Activated CD8-positive, alpha-beta memory T cell treated with anti-CD3 and anti-CD28 coated beads, Interleukin-2, amount 10 ng/mL, durations not matched to agents 7 days and 5 days (primary cell): ENCODE measurements at regions of chrX and their contacts with region 1.

Region 1: DNA sequence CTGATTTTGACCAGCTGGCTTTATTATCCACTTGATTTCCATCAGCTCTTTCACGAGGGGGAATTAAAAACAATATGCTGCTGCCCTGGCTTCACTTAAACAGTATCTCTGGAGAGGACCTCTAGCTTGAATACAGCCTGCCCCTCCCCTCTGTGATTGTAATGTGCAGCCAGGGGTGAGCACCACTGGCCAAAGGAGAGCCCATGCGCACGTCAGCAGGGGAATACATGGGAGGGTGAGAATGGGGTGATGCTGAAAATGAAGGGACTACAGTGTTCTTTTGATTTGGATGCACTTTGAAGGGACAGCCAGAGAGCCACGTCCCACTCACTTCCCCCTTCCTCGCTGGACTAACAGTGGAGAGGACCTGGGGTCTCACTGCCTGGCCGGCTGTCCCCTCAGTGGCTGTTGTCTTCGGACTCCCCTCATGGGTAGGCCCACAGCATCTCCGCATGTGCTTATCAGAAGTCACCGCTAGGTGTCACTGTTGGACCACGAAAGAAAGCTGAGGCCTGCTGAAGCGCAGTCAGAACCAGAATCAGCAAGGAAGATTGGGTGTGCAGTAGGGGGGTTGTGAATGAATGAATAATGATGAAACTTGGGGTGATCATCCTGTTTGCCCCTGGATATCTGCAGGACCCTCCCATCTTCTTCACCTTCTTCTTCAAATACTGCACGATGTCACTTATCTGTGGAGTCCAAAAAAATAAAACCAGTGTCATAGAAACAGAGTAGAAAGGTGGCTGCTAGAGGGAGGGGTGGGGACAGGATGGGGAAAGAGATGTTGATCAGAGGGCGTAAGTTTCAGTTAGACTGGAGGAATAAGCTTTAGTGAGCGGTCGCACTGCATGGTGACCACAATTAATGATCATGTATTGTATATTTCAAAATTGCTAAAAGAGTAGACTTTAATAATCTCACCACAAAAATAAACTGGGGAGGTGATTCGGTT is 32.8 kb downstream of the CLCN4 start:
- DNase-seq: peak; percentile 67
- ATAC-seq: peak; percentile 67
- H3K4me3 Mint-ChIP-seq: no peak overlapping the region
- H3K27ac Mint-ChIP-seq: no peak overlapping the region
- H3K4me1 Mint-ChIP-seq: peaks cover 3% of the 10 kb centered on the region
- H3K27me3 Mint-ChIP-seq: no peaks in the 10 kb centered on the region

Region 2: DNA sequence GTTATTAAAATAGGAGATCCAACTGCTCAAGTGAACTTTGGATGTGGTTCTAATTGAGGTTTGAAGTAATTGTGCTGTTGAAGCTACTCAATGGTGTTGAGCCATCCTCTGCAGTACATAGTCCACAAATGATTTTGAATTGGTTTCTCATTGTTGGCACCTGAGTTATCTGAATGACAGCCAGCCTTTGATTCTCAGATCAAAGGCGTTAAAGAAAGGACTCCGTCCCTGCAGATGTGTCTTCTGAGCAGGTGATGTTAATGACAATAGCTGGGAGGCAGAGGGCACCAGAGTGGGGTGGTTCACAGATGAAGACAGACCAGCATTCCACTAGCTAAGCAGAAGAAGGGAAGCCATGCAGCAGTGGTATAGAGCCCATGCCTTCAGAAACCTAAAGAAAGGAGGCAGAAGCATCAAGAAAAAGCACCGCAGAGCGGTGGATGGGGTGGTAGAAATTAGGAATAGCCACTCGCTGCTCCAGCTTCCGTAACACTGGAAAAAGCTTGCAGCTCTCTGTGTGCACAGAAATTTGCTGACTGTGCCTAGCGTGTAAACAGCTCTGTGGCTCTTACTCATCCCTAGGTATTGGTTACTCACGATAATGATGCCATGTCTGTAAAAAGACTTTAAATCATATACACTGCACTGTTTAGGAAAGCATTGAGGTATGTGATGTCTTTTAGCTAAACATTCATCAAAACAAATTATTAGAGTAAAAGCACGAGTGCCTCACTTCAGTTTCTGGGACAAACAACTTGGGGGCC is 112.0 kb before region 1 on chrX:
- CTCF ChIA-PET with region 1: no interaction called
- DNase-seq: no peak
- ATAC-seq: no peak
- H3K4me3 Mint-ChIP-seq: no peak overlapping the region
- H3K27ac Mint-ChIP-seq: no peak overlapping the region
- H3K4me1 Mint-ChIP-seq: peaks cover 6% of the 10 kb centered on the region
- H3K27me3 Mint-ChIP-seq: no peaks in the 10 kb centered on the region

Region 3: DNA sequence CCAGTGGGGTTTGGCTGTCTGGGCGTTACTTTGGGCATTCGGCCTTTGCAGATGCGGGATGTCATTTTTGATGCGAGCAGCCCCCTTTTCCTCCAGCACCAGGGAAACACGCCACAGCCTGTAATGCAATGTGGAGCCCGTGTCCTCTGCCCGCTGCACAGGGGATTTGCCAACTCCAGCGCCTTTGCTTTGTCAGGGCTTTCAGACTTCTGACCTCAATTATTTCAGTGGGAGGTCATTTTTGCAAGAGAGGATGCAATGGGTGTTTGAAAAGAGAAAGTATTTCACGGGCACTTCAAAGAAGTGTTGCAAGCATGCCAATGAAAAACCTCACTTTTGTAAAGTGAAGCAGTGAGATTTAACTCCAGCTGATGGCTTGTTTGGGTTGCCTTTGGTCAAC is 21.4 kb before region 1 on chrX:
- CTCF ChIA-PET with region 1: no interaction called
- DNase-seq: no peak
- ATAC-seq: no peak
- H3K4me3 Mint-ChIP-seq: no peak overlapping the region
- H3K27ac Mint-ChIP-seq: no peak overlapping the region
- H3K4me1 Mint-ChIP-seq: peaks cover 20% of the 10 kb centered on the region
- H3K27me3 Mint-ChIP-seq: peaks cover 8% of the 10 kb centered on the region

Region 4: GRCh38 chrX:10722851-10723250 is 533.3 kb after region 1 on chrX:
- CTCF ChIA-PET with region 1: interaction called, 19 read pairs
- DNase-seq: peak; percentile 46
- ATAC-seq: no peak
- H3K4me3 Mint-ChIP-seq: no peak overlapping the region
- H3K27ac Mint-ChIP-seq: no peak overlapping the region
- H3K4me1 Mint-ChIP-seq: no peaks in the 10 kb centered on the region
- H3K27me3 Mint-ChIP-seq: no peaks in the 10 kb centered on the region

Region 5: GRCh38 chrX:11137543-11138139 is 948.0 kb after region 1 on chrX:
- CTCF ChIA-PET with region 1: interaction called, 11 read pairs
- DNase-seq: no peak
- ATAC-seq: no peak
- H3K4me3 Mint-ChIP-seq: no peak overlapping the region
- H3K27ac Mint-ChIP-seq: no peak overlapping the region
- H3K4me1 Mint-ChIP-seq: no peaks in the 10 kb centered on the region
- H3K27me3 Mint-ChIP-seq: no peaks in the 10 kb centered on the region